ENCODE measurements at regions of chr20 and their contacts with region 1.

Region 1: DNA sequence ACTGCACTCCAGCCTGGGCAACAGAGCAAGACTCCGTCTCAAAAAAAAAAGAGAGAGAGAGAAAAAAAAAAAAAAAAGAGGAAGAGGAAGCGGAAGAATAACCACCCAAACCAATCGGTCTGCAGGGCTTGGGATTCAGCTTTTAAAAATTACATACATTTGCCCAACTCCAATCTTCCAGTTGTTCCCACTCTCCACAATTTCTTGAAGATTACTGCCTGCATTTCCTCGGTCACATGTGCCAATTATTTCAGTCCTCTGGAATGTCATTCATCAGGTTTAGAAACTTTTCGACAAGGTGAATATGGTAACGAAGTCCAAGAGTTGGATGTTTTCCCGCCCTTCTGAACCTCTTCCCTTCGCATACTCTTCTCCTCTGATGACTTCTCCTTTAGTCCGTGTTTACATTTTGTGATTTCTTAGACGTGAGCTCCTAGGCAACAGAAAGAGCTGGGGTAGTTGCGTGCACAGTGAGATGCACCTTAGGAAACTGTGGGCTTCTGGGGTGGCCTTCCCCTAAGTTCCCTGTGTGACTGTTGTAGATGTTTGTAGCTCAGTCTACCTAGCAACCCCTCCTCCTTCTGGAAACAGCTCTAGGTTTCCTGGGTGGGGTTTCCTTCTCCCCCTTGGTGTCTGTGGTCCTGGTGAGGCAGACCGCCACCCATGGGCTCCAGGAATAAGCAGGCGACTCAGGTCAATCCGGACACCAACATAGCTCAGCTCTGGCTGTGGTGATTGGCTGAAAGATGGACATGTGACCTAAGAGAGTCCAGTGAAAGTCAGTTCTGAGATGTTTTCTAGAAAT is 62.9 kb upstream of the NCOA3 start:
- DNase-seq: peak; percentile 92 to 96
- H3K4me3 ChIP-seq: peak overlapping the region; percentile 2; the same call in 1 of the 2 replicates
- H3K4me3 Mint-ChIP-seq: peak overlapping the region; percentile 64
- H3K27ac Mint-ChIP-seq: peak overlapping the region; percentile 91
- H3K4me1 ChIP-seq: peaks cover 53% of the 10 kb centered on the region
- H3K4me1 Mint-ChIP-seq: peaks cover 28% of the 10 kb centered on the region
- H3K27me3 ChIP-seq: no peaks in the 10 kb centered on the region
- H3K27me3 Mint-ChIP-seq: no peaks in the 10 kb centered on the region
- CTCF ChIP-seq: no peak

Region 2: DNA sequence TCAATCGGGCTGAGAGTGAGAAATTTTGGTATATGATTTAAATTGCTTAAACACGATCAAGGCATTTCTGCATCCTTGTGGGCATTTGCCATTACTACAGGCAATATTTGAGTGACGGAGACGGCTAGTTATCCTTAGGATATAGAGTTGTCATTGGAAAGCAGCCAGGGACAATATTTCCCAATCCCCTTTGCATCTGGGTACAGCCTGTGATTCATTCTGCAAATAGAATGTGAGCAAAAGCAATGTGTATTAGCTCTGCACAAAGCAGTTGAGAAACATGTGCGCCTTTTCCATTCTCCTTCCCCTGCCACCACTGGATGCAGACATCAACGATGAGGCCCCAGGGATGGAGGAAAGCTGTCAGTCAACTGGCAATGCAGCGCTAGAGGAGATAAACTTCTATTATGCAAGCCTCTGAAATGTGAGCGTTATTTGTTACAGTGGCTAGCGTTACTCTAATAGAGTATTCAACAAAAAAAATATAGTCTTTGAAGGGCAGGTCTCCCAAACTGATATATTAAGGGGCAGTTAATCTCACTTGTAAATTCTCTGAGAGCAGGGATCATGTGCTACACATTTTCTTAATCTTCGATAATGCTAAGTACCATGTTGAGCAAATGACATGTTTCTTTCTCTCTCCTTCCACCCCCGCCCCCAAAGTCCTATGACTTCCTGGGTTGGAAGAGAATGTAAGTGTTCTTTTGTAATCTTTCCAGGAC is 25.8 kb after region 1 on chr20:
- CTCF ChIA-PET with region 1: no interaction called
- POLR2A ChIA-PET with region 1: interaction called, 3 read pairs
- intact Hi-C with region 1: loop called (anchors 1 kb)
- DNase-seq: peak; percentile 87 to 91
- H3K4me3 ChIP-seq: no peak overlapping the region
- H3K4me3 Mint-ChIP-seq: no peak overlapping the region
- H3K27ac Mint-ChIP-seq: peak overlapping the region; percentile 64
- H3K4me1 ChIP-seq: peaks cover 37% of the 10 kb centered on the region
- H3K4me1 Mint-ChIP-seq: peaks cover 43% of the 10 kb centered on the region
- H3K27me3 ChIP-seq: no peaks in the 10 kb centered on the region
- H3K27me3 Mint-ChIP-seq: no peaks in the 10 kb centered on the region
- CTCF ChIP-seq: peak in 1 of 2 experiments; percentile 70

Region 3: GRCh38 chr20:47493175-47493962 is 54.6 kb after region 1 on chr20:
- CTCF ChIA-PET with region 1: interaction called, 4 read pairs
- POLR2A ChIA-PET with region 1: interaction called, 8 read pairs
- intact Hi-C with region 1: loop called (anchors 1 kb)
- DNase-seq: peak; percentile 86
- H3K4me3 ChIP-seq: peak overlapping the region; percentile 11; the same call in 1 of the 2 replicates
- H3K4me3 Mint-ChIP-seq: peak overlapping the region; percentile 54
- H3K27ac Mint-ChIP-seq: peak overlapping the region; percentile 48
- H3K4me1 ChIP-seq: peaks cover 23% of the 10 kb centered on the region
- H3K4me1 Mint-ChIP-seq: peaks cover 25% of the 10 kb centered on the region
- H3K27me3 ChIP-seq: no peaks in the 10 kb centered on the region
- H3K27me3 Mint-ChIP-seq: no peaks in the 10 kb centered on the region
- CTCF ChIP-seq: peak in 1 of 2 experiments; percentile 7